ENCODE measurements at regions of chr2 and their contacts with region 1.

Region 1: GRCh38 chr2:43219383-43220228 is 6.8 kb downstream of the ZFP36L2 start:
- DNase-seq: peak; percentile 88
- ATAC-seq: peak; percentile 69
- H3K4me3 Mint-ChIP-seq: peak overlapping the region; percentile 83
- H3K27ac Mint-ChIP-seq: peak overlapping the region; percentile 98
- H3K4me1 Mint-ChIP-seq: peaks cover 46% of the 10 kb centered on the region
- H3K27me3 Mint-ChIP-seq: no peaks in the 10 kb centered on the region

Region 2: DNA sequence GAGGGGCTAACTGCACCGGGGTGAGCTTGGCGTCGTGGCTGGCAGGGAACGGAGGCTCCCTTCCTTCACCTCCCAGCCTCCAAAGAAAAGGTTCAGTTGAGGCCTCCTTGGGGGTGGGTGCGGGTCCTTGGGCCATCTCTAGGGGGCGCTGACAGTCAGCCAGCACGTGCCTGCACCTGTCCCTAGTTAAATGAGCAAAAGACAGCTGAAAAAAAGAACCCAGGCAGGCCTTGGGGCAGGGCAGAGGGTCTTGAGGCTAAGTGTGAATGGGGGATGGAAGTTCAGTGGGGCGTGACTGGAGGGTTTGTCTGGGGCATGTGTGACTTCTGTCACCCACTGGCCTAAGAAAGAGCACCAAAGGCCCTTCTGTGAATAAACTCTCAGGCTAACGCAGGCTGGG is 49.6 kb before region 1 on chr2:
- CTCF ChIA-PET with region 1: interaction called, 24 read pairs
- POLR2A ChIA-PET with region 1: interaction called, 5 read pairs
- intact Hi-C with region 1: loop called (anchors 1 kb)
- DNase-seq: peak; percentile 85
- ATAC-seq: peak; percentile 27
- H3K4me3 Mint-ChIP-seq: peak overlapping the region; percentile 24
- H3K27ac Mint-ChIP-seq: peak overlapping the region; percentile 91
- H3K4me1 Mint-ChIP-seq: peaks cover 79% of the 10 kb centered on the region
- H3K27me3 Mint-ChIP-seq: no peaks in the 10 kb centered on the region

Region 3: DNA sequence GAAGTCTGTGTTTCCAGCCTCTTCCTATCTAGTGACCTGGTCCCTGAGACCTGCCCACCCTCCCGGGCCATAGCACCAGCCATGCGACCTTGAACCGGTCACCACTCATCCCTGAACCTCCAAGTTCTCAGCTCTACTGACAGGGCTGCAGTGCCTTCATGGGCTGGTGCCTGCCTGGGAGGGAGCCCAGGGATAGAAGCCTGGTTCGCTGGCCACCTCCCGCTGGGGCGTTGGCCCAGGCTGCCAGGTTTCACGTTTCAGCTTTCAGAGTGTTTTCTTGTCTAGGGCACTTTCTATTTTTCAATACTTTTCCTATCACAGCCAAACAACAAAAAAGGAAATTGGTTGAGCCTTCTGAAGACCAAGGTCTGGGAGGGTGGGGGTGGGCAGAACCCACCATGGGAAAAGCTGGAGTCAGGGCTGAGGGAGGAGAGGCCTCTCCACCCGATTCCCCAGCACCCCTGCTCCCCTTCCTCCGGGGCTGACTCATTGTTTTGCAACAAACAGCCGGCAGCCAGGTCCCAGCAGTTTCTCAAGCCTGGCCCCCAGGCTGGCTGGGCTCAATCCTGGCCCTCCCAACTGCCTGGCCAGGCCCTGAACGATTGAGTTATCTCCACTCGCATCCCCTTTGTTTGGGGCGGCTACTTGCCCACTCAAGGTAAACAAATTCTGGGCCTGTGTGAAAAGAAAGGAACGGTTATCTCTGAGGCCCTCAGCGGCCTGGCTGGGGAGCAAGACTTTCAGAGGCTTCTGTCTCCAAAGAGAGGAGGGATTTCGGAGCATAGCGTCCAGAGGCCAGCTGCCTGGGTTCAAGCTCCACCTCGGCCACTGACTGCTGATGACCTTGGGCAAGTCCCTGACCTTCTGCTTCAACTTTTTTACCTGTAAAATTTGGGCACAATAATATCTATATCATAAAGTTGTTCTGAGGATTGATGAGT is 40.7 kb before region 1 on chr2:
- CTCF ChIA-PET with region 1: interaction called, 14 read pairs
- POLR2A ChIA-PET with region 1: interaction called, 4 read pairs
- intact Hi-C with region 1: loop called (anchors 1 kb)
- DNase-seq: peak; percentile 57
- ATAC-seq: peak; percentile 10
- H3K4me3 Mint-ChIP-seq: peak overlapping the region; percentile 16
- H3K27ac Mint-ChIP-seq: peak overlapping the region; percentile 90
- H3K4me1 Mint-ChIP-seq: peaks cover 69% of the 10 kb centered on the region
- H3K27me3 Mint-ChIP-seq: no peaks in the 10 kb centered on the region

Region 4: GRCh38 chr2:43239981-43240761 is 20.6 kb after region 1 on chr2:
- CTCF ChIA-PET with region 1: no interaction called
- POLR2A ChIA-PET with region 1: no interaction called
- intact Hi-C with region 1: no loop called
- DNase-seq: no peak
- ATAC-seq: no peak
- H3K4me3 Mint-ChIP-seq: no peak overlapping the region
- H3K27ac Mint-ChIP-seq: no peak overlapping the region
- H3K4me1 Mint-ChIP-seq: peaks cover 10% of the 10 kb centered on the region
- H3K27me3 Mint-ChIP-seq: no peaks in the 10 kb centered on the region

Region 5: GRCh38 chr2:43265001-43265400 is 45.4 kb after region 1 on chr2:
- CTCF ChIA-PET with region 1: no interaction called
- POLR2A ChIA-PET with region 1: no interaction called
- intact Hi-C with region 1: no loop called
- DNase-seq: no peak
- ATAC-seq: no peak
- H3K4me3 Mint-ChIP-seq: no peak overlapping the region
- H3K27ac Mint-ChIP-seq: no peak overlapping the region
- H3K4me1 Mint-ChIP-seq: peaks cover 8% of the 10 kb centered on the region
- H3K27me3 Mint-ChIP-seq: no peaks in the 10 kb centered on the region

Measured in activated CD4-positive, alpha-beta T cell treated with anti-CD3 and anti-CD28 coated beads for 36 hours (primary cell).